H1 (cell line): ENCODE measurements at regions of chr3 and their contacts with region 1.

Region 1: GRCh38 chr3:87260270-87260669 is 16.1 kb downstream of the POU1F1 start:
- DNase-seq: peak in 1 of 2 experiments; percentile 56
- H3K4me3 ChIP-seq: no peak overlapping the region
- H3K27ac ChIP-seq: no peak overlapping the region
- H3K4me1 ChIP-seq: peaks cover 0 to 3% (median 1%) of the 10 kb centered on the region in 4 experiments; a peak in 1 of 7 replicates
- H3K27me3 ChIP-seq: no peaks in the 10 kb centered on the region
- CTCF ChIP-seq: peak in 2 of 3 experiments; percentile 32 to 58; a peak in 2 of 4 replicates
- EP300 ChIP-seq: no peak
- POLR2A ChIP-seq: no peak
- RAD21 ChIP-seq: peak; percentile 38 to 52

Region 2: GRCh38 chr3:87270908-87271700 is 10.8 kb after region 1 on chr3:
- CTCF ChIA-PET with region 1: interaction called, 30 read pairs
- POLR2A ChIA-PET with region 1: no interaction called
- DNase-seq: no peak
- H3K4me3 ChIP-seq: no peak overlapping the region
- H3K27ac ChIP-seq: no peak overlapping the region
- H3K4me1 ChIP-seq: no peaks in the 10 kb centered on the region
- H3K27me3 ChIP-seq: no peaks in the 10 kb centered on the region
- CTCF ChIP-seq: no peak
- EP300 ChIP-seq: no peak
- POLR2A ChIP-seq: no peak
- RAD21 ChIP-seq: no peak

Region 3: GRCh38 chr3:87276484-87276883 is 16.2 kb after region 1 on chr3 and contains the start of gene POU1F1:
- CTCF ChIA-PET with region 1: interaction called, 30 read pairs
- POLR2A ChIA-PET with region 1: no interaction called
- DNase-seq: no peak
- H3K4me3 ChIP-seq: no peak within 1 kb of the TSS
- H3K27ac ChIP-seq: no peak within 1 kb of the TSS
- H3K4me1 ChIP-seq: no peaks in the 10 kb centered on the region
- H3K27me3 ChIP-seq: no peaks in the 10 kb centered on the region
- CTCF ChIP-seq: no peak
- EP300 ChIP-seq: no peak
- POLR2A ChIP-seq: no peak
- RAD21 ChIP-seq: no peak
- total RNA-seq, gene POU1F1: not detected in 2 replicates

Region 4: DNA sequence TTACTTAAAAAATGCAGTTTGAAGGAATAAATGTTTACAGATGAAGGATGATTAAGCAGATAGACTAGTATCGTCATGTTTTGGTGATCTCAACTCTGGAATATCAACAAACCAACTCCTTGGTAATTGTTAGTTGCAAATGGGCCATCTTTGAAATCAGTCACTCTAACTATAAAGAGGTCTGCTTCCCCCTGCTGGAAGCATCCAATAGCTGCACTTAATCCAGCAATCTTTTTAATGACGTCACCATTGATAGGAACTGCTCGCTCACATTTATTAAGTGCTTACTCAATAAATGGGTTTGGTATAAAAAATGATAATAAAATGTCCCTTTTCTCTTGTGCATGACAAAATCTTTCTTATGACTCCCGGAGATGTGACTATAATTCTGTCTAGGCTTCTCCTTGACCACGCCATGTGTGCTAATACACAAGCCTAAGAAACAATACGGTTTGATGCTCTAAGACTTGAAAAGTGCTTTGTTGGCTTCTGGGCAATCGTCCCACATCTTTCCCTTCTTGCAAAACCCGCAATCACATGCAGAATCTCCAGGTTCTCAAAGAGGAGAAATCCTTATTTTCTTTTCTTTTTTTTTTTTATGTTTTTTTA is 243.7 kb after region 1 on chr3:
- CTCF ChIA-PET with region 1: interaction called, 10 read pairs
- POLR2A ChIA-PET with region 1: no interaction called
- DNase-seq: peak in 1 of 2 experiments; percentile 2
- H3K4me3 ChIP-seq: no peak overlapping the region
- H3K27ac ChIP-seq: no peak overlapping the region
- H3K4me1 ChIP-seq: no peaks in the 10 kb centered on the region
- H3K27me3 ChIP-seq: no peaks in the 10 kb centered on the region
- CTCF ChIP-seq: peak in 2 of 3 experiments; percentile 67 to 74; a peak in 3 of 4 replicates
- EP300 ChIP-seq: no peak
- POLR2A ChIP-seq: no peak
- RAD21 ChIP-seq: peak; percentile 85 to 86

Region 5: DNA sequence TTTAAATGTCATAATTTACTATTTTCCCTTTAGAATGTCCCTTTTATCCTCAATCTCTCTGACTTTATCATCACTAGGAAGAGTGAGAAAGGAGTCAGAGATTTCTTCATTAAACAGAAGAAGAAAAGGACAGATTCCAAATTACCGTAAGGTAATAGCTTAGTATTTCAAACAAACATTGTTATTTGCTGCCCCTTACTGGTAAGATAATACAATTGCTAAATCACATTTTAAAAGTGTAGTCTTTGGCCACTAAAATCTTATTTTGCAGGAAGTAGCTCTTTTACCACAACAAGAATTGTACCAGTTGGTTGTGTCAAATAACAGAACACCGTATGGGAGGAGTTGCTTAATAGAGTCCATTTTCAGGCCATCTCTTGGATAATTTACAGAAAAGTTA is 744.8 kb after region 1 on chr3:
- CTCF ChIA-PET with region 1: interaction called, 13 read pairs
- POLR2A ChIA-PET with region 1: no interaction called
- DNase-seq: no peak
- H3K4me3 ChIP-seq: no peak overlapping the region
- H3K27ac ChIP-seq: no peak overlapping the region
- H3K4me1 ChIP-seq: no peaks in the 10 kb centered on the region; a peak in 1 of 7 replicates
- H3K27me3 ChIP-seq: no peaks in the 10 kb centered on the region
- CTCF ChIP-seq: peak in 1 of 3 experiments; percentile 10; a peak in 1 of 4 replicates
- EP300 ChIP-seq: no peak
- POLR2A ChIP-seq: no peak
- RAD21 ChIP-seq: peak in 1 of 2 experiments; percentile 54; a peak in 3 of 4 replicates